ENCODE measurements at regions of chr18 and their contacts with region 1.

Region 1: DNA sequence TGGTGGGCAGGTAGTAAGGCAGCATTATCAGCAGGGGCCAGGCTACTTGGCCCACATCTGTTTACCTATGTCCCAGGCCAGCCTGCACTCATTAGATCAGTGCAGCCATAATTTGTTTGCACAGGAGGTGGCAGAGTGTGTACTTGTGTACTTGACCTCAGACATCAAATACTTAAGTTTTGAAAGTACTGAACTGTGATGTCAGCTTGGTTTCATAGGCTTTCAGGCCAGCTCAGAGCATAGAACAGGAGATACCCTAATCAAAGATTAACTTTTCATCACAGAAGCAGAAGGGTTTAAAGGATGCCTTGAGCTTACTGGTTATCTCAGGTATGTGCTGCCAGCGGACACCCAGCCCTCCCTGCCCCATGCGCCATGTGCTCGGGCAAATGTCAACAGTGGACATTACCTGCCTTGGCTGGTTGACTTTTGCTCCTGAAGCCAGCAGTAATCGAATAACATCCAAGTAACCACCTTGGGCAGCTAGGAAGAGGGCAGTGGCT is 33.2 kb downstream of the ANKRD29 start:
- DNase-seq: no peak
- H3K4me3 ChIP-seq: no peak overlapping the region
- CTCF ChIP-seq: no peak
- POLR2A ChIP-seq: no peak

Region 2: DNA sequence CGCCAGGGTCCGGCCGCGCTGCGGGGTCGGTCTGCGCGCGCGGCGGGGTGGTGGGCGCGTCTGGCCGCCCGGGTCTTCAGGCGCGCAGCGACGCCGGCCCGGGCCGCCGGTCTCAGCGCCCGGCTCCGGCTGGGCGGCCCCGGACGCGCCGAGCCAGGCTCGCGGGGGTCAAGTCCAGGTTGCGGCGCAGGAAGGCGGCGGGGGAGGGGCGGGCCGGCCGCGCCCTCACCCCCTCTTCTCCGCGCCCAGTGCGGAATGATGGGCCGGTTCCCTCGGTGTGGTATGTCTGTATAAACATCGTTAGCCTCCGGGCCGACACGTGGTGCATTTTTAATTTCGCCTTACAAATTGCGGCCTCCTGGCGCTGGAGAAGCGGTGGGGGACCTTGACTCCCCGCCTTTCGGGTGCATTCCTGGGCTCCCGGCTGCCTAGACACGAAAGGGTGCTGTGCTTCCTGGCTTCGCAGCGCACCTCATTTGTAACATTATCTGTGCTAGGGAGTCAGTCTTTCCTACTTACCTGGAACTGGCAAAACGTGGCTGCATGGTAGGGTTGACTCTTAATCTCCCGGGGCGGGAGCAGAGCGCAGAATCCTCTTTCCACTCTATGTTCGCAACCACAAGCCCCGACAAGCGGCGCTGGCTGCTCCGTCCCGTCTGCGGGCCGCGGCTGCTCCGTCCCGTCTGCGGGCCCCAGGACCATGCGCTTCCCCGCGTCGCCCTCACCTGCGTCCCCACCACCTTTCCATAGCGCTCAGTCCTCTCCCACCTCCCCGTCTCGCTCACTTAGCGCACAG is 1280.8 kb before region 1 on chr18:
- intact Hi-C with region 1: no loop called
- DNase-seq: no peak
- H3K4me3 ChIP-seq: no peak overlapping the region
- CTCF ChIP-seq: no peak
- POLR2A ChIP-seq: no peak

Region 3: GRCh38 chr18:23812546-23813440 is 183.3 kb after region 1 on chr18:
- intact Hi-C with region 1: loop called (anchors 10 kb)
- DNase-seq: no peak
- H3K4me3 ChIP-seq: no peak overlapping the region
- CTCF ChIP-seq: no peak
- POLR2A ChIP-seq: no peak

Region 4: DNA sequence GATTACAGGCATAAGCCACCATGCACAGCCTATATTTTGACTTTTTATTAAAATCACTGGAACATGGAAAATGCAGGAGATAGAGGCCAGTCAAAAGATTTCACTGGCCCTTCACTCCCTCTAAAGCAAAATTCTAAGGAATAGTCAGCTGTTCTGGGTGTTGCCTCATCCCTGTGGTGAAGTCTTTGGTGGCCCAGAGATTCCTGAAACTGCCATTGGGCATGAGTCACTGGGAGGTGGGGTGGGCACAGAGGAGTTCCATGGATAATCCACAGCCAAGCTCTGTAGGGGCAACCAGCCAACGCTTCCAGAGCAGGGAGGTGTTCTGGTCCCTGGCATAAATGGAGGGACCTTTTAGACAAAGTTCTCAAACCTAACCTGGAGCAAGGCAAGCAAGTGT is 295.3 kb after region 1 on chr18:
- intact Hi-C with region 1: loop called (anchors 10 kb)
- DNase-seq: no peak
- H3K4me3 ChIP-seq: no peak overlapping the region
- CTCF ChIP-seq: no peak
- POLR2A ChIP-seq: no peak